Naive thymus-derived CD4-positive, alpha-beta T cell (primary cell): ENCODE measurements at regions of chr20 and their contacts with region 1.

Region 1: GRCh38 chr20:52972190-52972937 is at the start of gene TSHZ2:
- DNase-seq: peak; percentile 27 to 75 (median 58)
- ATAC-seq: peak; percentile 66
- H3K4me3 ChIP-seq: peak within 1 kb of the TSS; percentile 65
- H3K4me3 Mint-ChIP-seq: peak within 1 kb of the TSS; percentile 90 to 100 (median 96)
- H3K27ac ChIP-seq: peak within 1 kb of the TSS; percentile 97
- H3K27ac Mint-ChIP-seq: peak within 1 kb of the TSS; percentile 93 to 97 (median 95)
- H3K4me1 ChIP-seq: peaks cover 0 to 12% of the 10 kb centered on the region in 2 donors
- H3K4me1 Mint-ChIP-seq: peaks cover 12 to 45% (median 38%) of the 10 kb centered on the region in 7 donors
- H3K27me3 ChIP-seq: peaks cover 0 to 3% of the 10 kb centered on the region in 2 donors
- H3K27me3 Mint-ChIP-seq: peaks cover 0 to 32% (median 7%) of the 10 kb centered on the region in 5 donors
- total RNA-seq, gene TSHZ2: 21.0 to 84.5 (median 59.2) TPM

Region 2: DNA sequence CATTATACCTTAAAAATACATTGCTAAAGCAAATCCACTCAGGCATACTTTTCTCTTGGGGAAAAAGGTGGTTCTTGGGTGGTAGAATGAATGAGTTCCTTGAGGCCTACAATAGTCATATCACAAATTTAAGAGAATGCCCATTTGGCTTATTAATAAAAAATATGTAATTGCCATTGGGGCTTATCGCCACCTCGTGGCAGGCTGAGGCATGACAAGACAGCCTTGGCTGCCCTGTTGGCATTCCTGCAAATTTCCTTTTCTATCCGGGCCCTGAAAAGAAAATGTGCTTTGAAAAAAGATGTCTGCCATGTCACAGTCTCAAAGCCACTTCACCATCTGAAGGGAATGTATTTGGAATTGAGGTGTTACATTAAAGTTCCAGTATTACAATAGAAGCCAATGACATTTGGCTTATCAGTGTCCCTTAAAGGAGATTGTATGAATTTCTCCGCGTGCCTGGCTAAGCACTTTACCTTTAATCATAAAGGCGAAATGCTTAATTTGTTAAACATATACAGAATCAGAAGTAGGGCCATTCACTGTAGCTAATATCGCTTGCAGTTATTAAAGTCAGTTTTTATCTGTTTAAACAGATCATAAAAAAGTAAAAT is 592.5 kb before region 1 on chr20:
- CTCF ChIA-PET with region 1: no interaction called
- POLR2A ChIA-PET with region 1: no interaction called
- intact Hi-C with region 1: loop called in 1 of 2 experiments (anchors 1 kb)
- DNase-seq: peak in 6 of 9 donors; percentile 13 to 35 (median 22)
- ATAC-seq: no peak
- H3K4me3 ChIP-seq: no peak overlapping the region
- H3K4me3 Mint-ChIP-seq: peak overlapping the region in 1 of 10 donors; percentile 14
- H3K27ac ChIP-seq: no peak overlapping the region
- H3K27ac Mint-ChIP-seq: peak overlapping the region in 5 of 9 donors; percentile 6 to 71 (median 45)
- H3K4me1 ChIP-seq: peaks cover 0 to 14% of the 10 kb centered on the region in 2 donors
- H3K4me1 Mint-ChIP-seq: peaks cover 0 to 47% (median 25%) of the 10 kb centered on the region in 7 donors
- H3K27me3 ChIP-seq: no peaks in the 10 kb centered on the region
- H3K27me3 Mint-ChIP-seq: peaks cover 0 to 2% (median 0%) of the 10 kb centered on the region in 5 donors

Region 3: DNA sequence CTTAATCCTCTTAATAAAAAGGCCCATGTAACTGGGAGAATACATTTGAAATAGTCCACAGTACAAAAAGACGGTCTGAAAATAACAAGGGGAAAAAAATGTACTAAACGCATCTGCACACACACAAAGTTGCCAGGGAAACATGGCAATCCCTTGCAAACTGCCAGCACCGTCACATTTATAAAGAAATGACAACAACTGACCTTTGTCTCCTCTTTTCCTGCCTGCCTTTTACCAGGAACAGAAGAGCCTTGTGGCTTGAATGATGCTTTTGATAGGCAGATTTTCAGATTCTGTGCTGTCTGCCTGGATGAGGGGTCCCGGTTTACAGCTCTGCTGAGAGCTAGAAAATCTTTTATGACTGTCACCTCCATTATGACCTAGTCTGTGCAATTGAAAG is 472.2 kb before region 1 on chr20:
- CTCF ChIA-PET with region 1: no interaction called
- POLR2A ChIA-PET with region 1: interaction called, 11 read pairs
- intact Hi-C with region 1: no loop called
- DNase-seq: no peak
- ATAC-seq: no peak
- H3K4me3 ChIP-seq: no peak overlapping the region
- H3K4me3 Mint-ChIP-seq: no peak overlapping the region
- H3K27ac ChIP-seq: no peak overlapping the region
- H3K27ac Mint-ChIP-seq: no peak overlapping the region
- H3K4me1 ChIP-seq: no peaks in the 10 kb centered on the region
- H3K4me1 Mint-ChIP-seq: peaks cover 0 to 2% (median 0%) of the 10 kb centered on the region in 7 donors
- H3K27me3 ChIP-seq: no peaks in the 10 kb centered on the region
- H3K27me3 Mint-ChIP-seq: peaks cover 0 to 6% (median 0%) of the 10 kb centered on the region in 5 donors

Region 4: GRCh38 chr20:53001498-53002301 is 29.3 kb after region 1 on chr20:
- CTCF ChIA-PET with region 1: interaction called, 13 read pairs
- POLR2A ChIA-PET with region 1: interaction called, 299 read pairs
- intact Hi-C with region 1: loop called (anchors 1 kb)
- DNase-seq: peak in 7 of 9 donors; percentile 49 to 79 (median 71)
- ATAC-seq: peak; percentile 82
- H3K4me3 ChIP-seq: peak overlapping the region; percentile 32
- H3K4me3 Mint-ChIP-seq: peak overlapping the region; percentile 73 to 94 (median 84)
- H3K27ac ChIP-seq: peak overlapping the region; percentile 88
- H3K27ac Mint-ChIP-seq: peak overlapping the region in 7 of 9 donors; percentile 89 to 99 (median 97)
- H3K4me1 ChIP-seq: peaks cover 0 to 64% of the 10 kb centered on the region in 2 donors
- H3K4me1 Mint-ChIP-seq: peaks cover 27 to 97% (median 87%) of the 10 kb centered on the region in 7 donors
- H3K27me3 ChIP-seq: no peaks in the 10 kb centered on the region
- H3K27me3 Mint-ChIP-seq: no peaks in the 10 kb centered on the region

Region 5: DNA sequence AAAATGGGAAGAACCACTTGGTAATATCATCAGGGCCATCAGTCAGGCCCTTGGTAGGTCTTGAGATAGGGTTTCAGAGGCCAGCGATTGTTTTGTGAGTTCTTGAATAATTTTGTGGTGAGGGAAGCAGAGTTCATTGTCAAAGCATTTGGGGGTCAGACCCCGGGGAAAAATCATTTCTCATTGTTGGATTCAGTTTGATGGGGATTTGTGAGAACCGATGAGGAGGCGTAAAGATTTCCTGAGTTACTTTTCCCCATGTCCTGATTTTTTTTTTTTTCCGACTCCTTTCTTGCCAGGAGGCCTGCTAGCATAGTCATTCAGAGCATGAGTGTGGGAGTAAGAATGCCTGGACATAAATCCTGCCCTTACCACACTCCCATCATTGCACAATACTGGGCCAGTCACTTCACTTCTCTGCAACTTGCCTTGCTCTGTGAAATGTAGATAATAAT is 60.1 kb after region 1 on chr20:
- CTCF ChIA-PET with region 1: interaction called, 6 read pairs
- POLR2A ChIA-PET with region 1: interaction called, 4 read pairs
- intact Hi-C with region 1: loop called in 1 of 2 experiments (anchors 2 kb)
- DNase-seq: no peak
- ATAC-seq: no peak
- H3K4me3 ChIP-seq: no peak overlapping the region
- H3K4me3 Mint-ChIP-seq: no peak overlapping the region
- H3K27ac ChIP-seq: no peak overlapping the region
- H3K27ac Mint-ChIP-seq: peak overlapping the region in 3 of 9 donors; percentile 11 to 42 (median 31)
- H3K4me1 ChIP-seq: peaks cover 0 to 19% of the 10 kb centered on the region in 2 donors
- H3K4me1 Mint-ChIP-seq: peaks cover 22 to 70% (median 51%) of the 10 kb centered on the region in 7 donors
- H3K27me3 ChIP-seq: no peaks in the 10 kb centered on the region
- H3K27me3 Mint-ChIP-seq: peaks cover 0 to 7% (median 0%) of the 10 kb centered on the region in 5 donors

Region 6: GRCh38 chr20:53138454-53139262 is 166.3 kb after region 1 on chr20:
- CTCF ChIA-PET with region 1: no interaction called
- POLR2A ChIA-PET with region 1: no interaction called
- intact Hi-C with region 1: loop called in 1 of 2 experiments (anchors 10 kb)
- DNase-seq: no peak
- ATAC-seq: no peak
- H3K4me3 ChIP-seq: no peak overlapping the region
- H3K4me3 Mint-ChIP-seq: peak overlapping the region in 1 of 10 donors; percentile 14
- H3K27ac ChIP-seq: no peak overlapping the region
- H3K27ac Mint-ChIP-seq: peak overlapping the region in 3 of 9 donors; percentile 14 to 69 (median 28)
- H3K4me1 ChIP-seq: peaks cover 0 to 5% of the 10 kb centered on the region in 2 donors
- H3K4me1 Mint-ChIP-seq: peaks cover 10 to 47% (median 32%) of the 10 kb centered on the region in 7 donors
- H3K27me3 ChIP-seq: no peaks in the 10 kb centered on the region
- H3K27me3 Mint-ChIP-seq: no peaks in the 10 kb centered on the region

Region 7: GRCh38 chr20:53949319-53949889 is 977.0 kb after region 1 on chr20:
- CTCF ChIA-PET with region 1: no interaction called
- POLR2A ChIA-PET with region 1: no interaction called
- intact Hi-C with region 1: loop called in 1 of 2 experiments (anchors 5 kb)
- DNase-seq: peak; percentile 45 to 89 (median 86)
- ATAC-seq: peak; percentile 97
- H3K4me3 ChIP-seq: peak overlapping the region; percentile 1
- H3K4me3 Mint-ChIP-seq: peak overlapping the region; percentile 39 to 87 (median 76)
- H3K27ac ChIP-seq: peak overlapping the region; percentile 82
- H3K27ac Mint-ChIP-seq: peak overlapping the region; percentile 76 to 99 (median 97)
- H3K4me1 ChIP-seq: peaks cover 26 to 28% of the 10 kb centered on the region in 2 donors
- H3K4me1 Mint-ChIP-seq: peaks cover 23 to 47% (median 41%) of the 10 kb centered on the region in 7 donors
- H3K27me3 ChIP-seq: no peaks in the 10 kb centered on the region
- H3K27me3 Mint-ChIP-seq: peaks cover 0 to 2% (median 0%) of the 10 kb centered on the region in 5 donors